ENCODE measurements at regions of chr4 and their contacts with region 1.

Region 1: GRCh38 chr4:98260579-98261290 is 449 bp upstream of the RAP1GDS1 start:
- DNase-seq: peak in 4 of 5 donors; percentile 83 to 90 (median 84)
- H3K4me3 ChIP-seq: peak overlapping the region; percentile 70 to 82
- H3K4me3 Mint-ChIP-seq: peak overlapping the region; percentile 93 to 95 (median 94)
- H3K27ac ChIP-seq: peak overlapping the region; percentile 86
- H3K27ac Mint-ChIP-seq: peak overlapping the region; percentile 90 to 94 (median 93)
- H3K4me1 ChIP-seq: peaks cover 32% of the 10 kb centered on the region
- H3K4me1 Mint-ChIP-seq: peaks cover 37 to 60% (median 47%) of the 10 kb centered on the region in 4 donors
- H3K27me3 ChIP-seq: no peaks in the 10 kb centered on the region
- H3K27me3 Mint-ChIP-seq: no peaks in the 10 kb centered on the region

Region 2: GRCh38 chr4:98275145-98275544 is 14.4 kb after region 1 on chr4:
- CTCF ChIA-PET with region 1: interaction called, 3 read pairs
- POLR2A ChIA-PET with region 1: interaction called, 12 read pairs
- intact Hi-C with region 1: no loop called
- DNase-seq: no peak
- H3K4me3 ChIP-seq: no peak overlapping the region
- H3K4me3 Mint-ChIP-seq: no peak overlapping the region
- H3K27ac ChIP-seq: no peak overlapping the region
- H3K27ac Mint-ChIP-seq: no peak overlapping the region
- H3K4me1 ChIP-seq: no peaks in the 10 kb centered on the region
- H3K4me1 Mint-ChIP-seq: peaks cover 12 to 34% (median 25%) of the 10 kb centered on the region in 4 donors
- H3K27me3 ChIP-seq: no peaks in the 10 kb centered on the region
- H3K27me3 Mint-ChIP-seq: no peaks in the 10 kb centered on the region

Region 3: DNA sequence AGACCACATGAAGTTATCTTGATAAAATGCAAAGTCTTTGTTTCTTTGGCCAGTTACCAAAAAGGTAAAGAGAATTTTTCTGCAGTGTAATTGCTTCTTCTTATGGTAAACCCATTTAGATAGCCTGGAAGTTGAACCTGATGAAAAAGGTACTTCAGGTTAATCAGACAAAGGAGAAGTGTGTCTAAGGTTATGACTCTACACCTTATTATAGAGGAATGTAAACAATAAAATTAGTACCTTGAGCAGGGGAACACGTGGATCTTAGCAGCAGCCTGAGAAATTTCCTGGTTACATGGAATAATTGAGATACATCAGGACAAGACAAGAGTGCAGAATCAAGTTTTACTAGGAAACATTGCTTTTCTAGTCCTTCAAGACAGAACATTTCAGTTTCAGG is 71.3 kb after region 1 on chr4:
- CTCF ChIA-PET with region 1: no interaction called
- POLR2A ChIA-PET with region 1: no interaction called
- intact Hi-C with region 1: no loop called
- DNase-seq: no peak
- H3K4me3 ChIP-seq: no peak overlapping the region
- H3K4me3 Mint-ChIP-seq: no peak overlapping the region
- H3K27ac ChIP-seq: no peak overlapping the region
- H3K27ac Mint-ChIP-seq: no peak overlapping the region
- H3K4me1 ChIP-seq: no peaks in the 10 kb centered on the region
- H3K4me1 Mint-ChIP-seq: peaks cover under 1 to 6% (median 3%) of the 10 kb centered on the region in 4 donors
- H3K27me3 ChIP-seq: no peaks in the 10 kb centered on the region
- H3K27me3 Mint-ChIP-seq: no peaks in the 10 kb centered on the region

Region 4: DNA sequence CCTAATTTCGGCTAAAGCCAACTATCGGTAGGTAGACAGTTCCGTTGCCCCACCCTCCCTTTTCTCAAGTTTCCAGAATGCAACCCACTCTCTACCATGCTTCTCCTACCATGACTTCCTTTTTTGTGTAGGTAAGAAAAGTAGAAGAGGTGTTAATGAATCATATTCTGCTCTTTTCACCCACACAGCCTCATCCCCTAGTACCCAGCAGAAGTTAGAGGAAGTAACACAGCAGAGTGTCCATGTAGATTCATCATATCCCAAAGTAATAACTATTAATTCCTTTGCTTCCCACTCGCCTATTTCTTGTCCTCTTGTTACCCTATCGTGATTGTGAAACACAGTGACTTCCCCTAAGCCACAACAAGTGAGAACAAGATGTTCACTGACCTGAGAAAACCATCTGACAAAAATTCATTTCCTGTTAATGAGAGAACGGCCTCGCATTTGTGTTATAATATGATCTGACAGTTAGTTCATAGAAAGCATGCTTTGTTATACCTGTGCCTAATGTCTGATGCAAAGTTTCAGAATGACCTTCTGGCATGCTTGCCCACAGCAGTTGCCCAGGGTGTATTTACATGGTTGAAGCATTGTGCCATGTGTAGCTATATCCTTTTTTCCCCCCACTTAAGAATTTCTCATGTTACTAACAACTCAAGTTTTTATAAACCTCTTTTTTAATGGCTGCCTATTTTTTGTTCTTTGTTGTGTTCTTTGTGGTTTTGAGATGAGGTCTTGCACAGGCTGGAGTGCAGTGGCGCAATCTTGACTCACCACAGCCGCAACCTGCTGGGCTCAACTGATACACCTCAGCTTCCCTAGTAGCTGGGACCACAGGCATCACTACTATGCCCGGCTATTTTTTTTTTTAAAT is 186.0 kb after region 1 on chr4:
- CTCF ChIA-PET with region 1: no interaction called
- POLR2A ChIA-PET with region 1: interaction called, 21 read pairs
- intact Hi-C with region 1: loop called (anchors 2 kb)
- DNase-seq: peak; percentile 74 to 78 (median 77)
- H3K4me3 ChIP-seq: peak overlapping the region in 1 of 2 donors; percentile 3
- H3K4me3 Mint-ChIP-seq: peak overlapping the region; percentile 61 to 88 (median 78)
- H3K27ac ChIP-seq: peak overlapping the region; percentile 37
- H3K27ac Mint-ChIP-seq: peak overlapping the region; percentile 76 to 93 (median 91)
- H3K4me1 ChIP-seq: peaks cover 48% of the 10 kb centered on the region
- H3K4me1 Mint-ChIP-seq: peaks cover 37 to 47% (median 40%) of the 10 kb centered on the region in 4 donors
- H3K27me3 ChIP-seq: no peaks in the 10 kb centered on the region
- H3K27me3 Mint-ChIP-seq: no peaks in the 10 kb centered on the region

Region 5: GRCh38 chr4:99088481-99089365 is 828.0 kb after region 1 on chr4 and contains the start of gene ADH5:
- CTCF ChIA-PET with region 1: no interaction called
- POLR2A ChIA-PET with region 1: interaction called, 17 read pairs
- intact Hi-C with region 1: loop called (anchors 1 kb)
- DNase-seq: peak; percentile 83 to 90 (median 86)
- H3K4me3 ChIP-seq: peak within 1 kb of the TSS; percentile 73 to 99
- H3K4me3 Mint-ChIP-seq: peak within 1 kb of the TSS; percentile 92 to 99 (median 98)
- H3K27ac ChIP-seq: peak within 1 kb of the TSS; percentile 77
- H3K27ac Mint-ChIP-seq: peak within 1 kb of the TSS; percentile 89 to 99 (median 98)
- H3K4me1 ChIP-seq: peaks cover 39% of the 10 kb centered on the region
- H3K4me1 Mint-ChIP-seq: peaks cover 35 to 71% (median 54%) of the 10 kb centered on the region in 4 donors
- H3K27me3 ChIP-seq: no peaks in the 10 kb centered on the region
- H3K27me3 Mint-ChIP-seq: no peaks in the 10 kb centered on the region
- total RNA-seq, gene ADH5: 75.6 to 80.5 TPM

Region 6: DNA sequence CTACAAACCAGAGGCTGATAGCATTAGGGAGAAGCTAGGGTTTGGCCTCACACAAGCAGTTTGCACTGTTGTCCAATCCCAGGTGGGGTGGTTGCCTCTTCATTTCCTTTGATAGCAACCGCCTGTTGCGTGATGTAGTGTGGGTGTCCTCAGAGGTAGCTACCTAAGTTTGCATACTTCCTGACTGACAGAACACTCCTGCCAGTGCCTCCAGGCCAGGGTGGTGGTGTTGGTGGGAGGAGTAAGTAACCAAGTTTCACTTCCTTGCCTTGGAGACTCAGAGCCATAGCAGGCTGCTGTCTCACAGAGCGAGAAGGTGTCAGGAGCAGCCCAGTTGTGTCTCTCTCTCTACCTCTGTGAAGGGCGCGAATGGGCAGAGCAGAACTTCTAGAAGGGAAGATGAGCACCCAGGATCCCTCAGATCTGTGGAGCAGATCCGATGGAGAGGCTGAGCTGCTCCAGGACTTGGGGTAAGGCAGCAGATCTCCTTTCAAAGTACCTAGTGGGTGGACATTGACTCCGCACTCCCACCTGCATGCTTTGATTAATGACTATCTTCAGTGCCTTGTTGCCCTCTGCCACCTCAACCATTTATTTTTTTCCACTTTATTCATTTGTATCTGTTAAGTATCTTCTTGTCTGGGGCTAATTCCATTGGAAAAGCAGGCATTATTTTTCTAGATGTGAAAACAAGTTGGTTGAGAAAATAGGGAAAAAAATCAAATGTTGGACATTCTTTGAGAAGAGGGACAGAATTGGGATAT is 1556.0 kb after region 1 on chr4 and contains the start of gene DAPP1:
- CTCF ChIA-PET with region 1: no interaction called
- POLR2A ChIA-PET with region 1: no interaction called
- intact Hi-C with region 1: loop called (anchors 10 kb)
- DNase-seq: peak; percentile 82 to 93 (median 87)
- H3K4me3 ChIP-seq: peak within 1 kb of the TSS; percentile 55 to 92
- H3K4me3 Mint-ChIP-seq: peak within 1 kb of the TSS; percentile 89 to 95 (median 91)
- H3K27ac ChIP-seq: peak within 1 kb of the TSS; percentile 69
- H3K27ac Mint-ChIP-seq: peak within 1 kb of the TSS; percentile 91 to 98 (median 97)
- H3K4me1 ChIP-seq: peaks cover 63% of the 10 kb centered on the region
- H3K4me1 Mint-ChIP-seq: peaks cover 44 to 61% (median 54%) of the 10 kb centered on the region in 4 donors
- H3K27me3 ChIP-seq: no peaks in the 10 kb centered on the region
- H3K27me3 Mint-ChIP-seq: no peaks in the 10 kb centered on the region
- total RNA-seq, gene DAPP1: 21.3 to 23.0 TPM

Measured in CD4-positive, alpha-beta memory T cell (primary cell).